HepG2 (cell line): ENCODE measurements at regions of chr10 and their contacts with region 1.

Region 1: GRCh38 chr10:3811291-3811870 is 26.4 kb upstream of the KLF6 start:
- DNase-seq: no peak
- ATAC-seq: 0 out of 3 replicates have a peak, but pooled peaks have one; percentile 12
- H3K4me3 ChIP-seq: peak overlapping the region in 1 of 3 experiments; percentile 7; a peak in 1 of 6 replicates
- H3K27ac ChIP-seq: peak overlapping the region; percentile 97
- H3K4me1 ChIP-seq: peaks cover 80% of the 10 kb centered on the region
- H3K27me3 ChIP-seq: no peaks in the 10 kb centered on the region
- CTCF ChIP-seq: no peak
- EP300 ChIP-seq: no peak
- POLR2A ChIP-seq: no peak
- RAD21 ChIP-seq: no peak

Region 2: GRCh38 chr10:3585385-3585784 is 226.0 kb before region 1 on chr10:
- CTCF ChIA-PET with region 1: no interaction called
- POLR2A ChIA-PET with region 1: no interaction called
- in situ Hi-C with region 1: no loop called
- intact Hi-C with region 1: no loop called
- DNase-seq: no peak
- ATAC-seq: no peak
- H3K4me3 ChIP-seq: no peak overlapping the region
- H3K27ac ChIP-seq: no peak overlapping the region
- H3K4me1 ChIP-seq: no peaks in the 10 kb centered on the region
- H3K27me3 ChIP-seq: peaks cover 1 to 21% of the 10 kb centered on the region in 2 experiments; a peak in 2 of 5 replicates
- CTCF ChIP-seq: no peak
- EP300 ChIP-seq: no peak
- POLR2A ChIP-seq: no peak
- RAD21 ChIP-seq: no peak

Region 3: GRCh38 chr10:3828404-3829155 is 17.2 kb after region 1 on chr10:
- CTCF ChIA-PET with region 1: no interaction called
- POLR2A ChIA-PET with region 1: interaction called, 19 read pairs
- in situ Hi-C with region 1: no loop called
- intact Hi-C with region 1: no loop called
- DNase-seq: no peak
- ATAC-seq: no peak
- H3K4me3 ChIP-seq: no peak overlapping the region
- H3K27ac ChIP-seq: no peak overlapping the region
- H3K4me1 ChIP-seq: peaks cover 74% of the 10 kb centered on the region
- H3K27me3 ChIP-seq: no peaks in the 10 kb centered on the region
- CTCF ChIP-seq: no peak
- EP300 ChIP-seq: no peak
- POLR2A ChIP-seq: no peak
- RAD21 ChIP-seq: no peak

Region 4: GRCh38 chr10:3887885-3888476 is 76.6 kb after region 1 on chr10:
- CTCF ChIA-PET with region 1: no interaction called
- POLR2A ChIA-PET with region 1: interaction called, 52 read pairs
- in situ Hi-C with region 1: no loop called
- intact Hi-C with region 1: loop called (anchors 5 kb)
- DNase-seq: no peak
- ATAC-seq: no peak
- H3K4me3 ChIP-seq: no peak overlapping the region
- H3K27ac ChIP-seq: peak overlapping the region; percentile 78
- H3K4me1 ChIP-seq: peaks cover 68% of the 10 kb centered on the region
- H3K27me3 ChIP-seq: no peaks in the 10 kb centered on the region
- CTCF ChIP-seq: no peak
- EP300 ChIP-seq: no peak
- POLR2A ChIP-seq: no peak
- RAD21 ChIP-seq: no peak

Region 5: DNA sequence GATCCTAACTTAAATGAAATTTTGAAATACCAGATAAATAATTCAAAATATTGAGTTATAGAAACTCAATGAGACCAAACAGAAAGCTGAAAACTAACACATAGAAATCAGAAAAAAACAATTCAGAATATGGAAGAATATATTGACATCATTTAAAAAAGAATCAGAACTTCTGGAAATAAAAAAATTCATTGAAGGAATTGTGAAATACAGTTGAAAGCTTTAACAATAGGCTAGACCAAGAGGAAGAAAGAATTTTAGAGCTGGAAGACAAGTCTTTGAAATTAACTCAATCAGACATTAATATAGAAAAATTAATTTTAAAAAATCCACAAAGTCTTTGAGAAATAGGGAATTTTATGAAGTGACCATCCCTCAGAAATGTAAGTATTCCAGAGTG is 1115.0 kb after region 1 on chr10:
- CTCF ChIA-PET with region 1: no interaction called
- POLR2A ChIA-PET with region 1: no interaction called
- in situ Hi-C with region 1: no loop called
- intact Hi-C with region 1: no loop called
- DNase-seq: no peak
- ATAC-seq: no peak
- H3K4me3 ChIP-seq: no peak overlapping the region
- H3K27ac ChIP-seq: no peak overlapping the region
- H3K4me1 ChIP-seq: peaks cover under 1% of the 10 kb centered on the region; the same call in 1 of the 2 replicates
- H3K27me3 ChIP-seq: no peaks in the 10 kb centered on the region
- CTCF ChIP-seq: no peak
- EP300 ChIP-seq: no peak
- POLR2A ChIP-seq: no peak
- RAD21 ChIP-seq: no peak